CD4-positive, alpha-beta T cell (primary cell): ENCODE measurements at regions of chr7 and their contacts with region 1.

Region 1: GRCh38 chr7:116929914-116930913 is 23.1 kb upstream of the ST7 start:
- DNase-seq: peak; percentile 63 to 85 (median 71)
- ATAC-seq: peak; percentile 93
- H3K4me3 ChIP-seq: no peak overlapping the region
- H3K4me3 Mint-ChIP-seq: no peak overlapping the region
- H3K27ac ChIP-seq: no peak overlapping the region
- H3K27ac Mint-ChIP-seq: no peak overlapping the region
- H3K4me1 ChIP-seq: peaks cover 6% of the 10 kb centered on the region
- H3K4me1 Mint-ChIP-seq: peaks cover 8% of the 10 kb centered on the region
- H3K27me3 ChIP-seq: no peaks in the 10 kb centered on the region
- H3K27me3 Mint-ChIP-seq: peaks cover 9% of the 10 kb centered on the region
- CTCF ChIP-seq: peak; percentile 97

Region 2: DNA sequence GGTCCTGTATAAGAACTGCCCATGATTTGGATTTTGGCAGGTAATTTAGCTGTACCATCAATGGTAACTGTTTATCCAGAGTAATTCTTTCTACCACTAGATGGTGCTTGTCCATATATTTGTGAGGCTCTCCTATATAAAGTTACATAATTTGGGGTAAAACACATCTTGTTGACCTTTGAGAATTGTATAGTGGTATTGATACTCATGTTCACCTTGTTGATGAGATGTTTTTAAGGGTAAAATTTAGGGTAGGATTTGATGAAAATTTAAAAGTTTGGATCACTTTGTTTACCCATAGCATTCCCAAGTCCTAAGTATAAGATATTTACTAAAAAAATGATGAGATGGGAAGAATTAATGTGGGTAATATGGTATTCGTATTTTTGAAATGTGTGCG is 54.7 kb after region 1 on chr7:
- CTCF ChIA-PET with region 1: interaction called, 4 read pairs
- POLR2A ChIA-PET with region 1: no interaction called
- intact Hi-C with region 1: loop called (anchors 2 kb)
- DNase-seq: peak in 3 of 14 experiments; percentile 55 to 62 (median 61)
- ATAC-seq: peak; percentile 55
- H3K4me3 ChIP-seq: no peak overlapping the region
- H3K4me3 Mint-ChIP-seq: no peak overlapping the region
- H3K27ac ChIP-seq: no peak overlapping the region
- H3K27ac Mint-ChIP-seq: no peak overlapping the region
- H3K4me1 ChIP-seq: no peaks in the 10 kb centered on the region
- H3K4me1 Mint-ChIP-seq: peaks cover 3% of the 10 kb centered on the region
- H3K27me3 ChIP-seq: no peaks in the 10 kb centered on the region
- H3K27me3 Mint-ChIP-seq: no peaks in the 10 kb centered on the region
- CTCF ChIP-seq: peak; percentile 83

Region 3: GRCh38 chr7:117012696-117013095 is 82.5 kb after region 1 on chr7:
- CTCF ChIA-PET with region 1: interaction called, 6 read pairs
- POLR2A ChIA-PET with region 1: no interaction called
- intact Hi-C with region 1: loop called in 1 of 2 experiments (anchors 2 kb)
- DNase-seq: peak in 3 of 14 experiments; percentile 32 to 57 (median 52)
- ATAC-seq: peak; percentile 59
- H3K4me3 ChIP-seq: no peak overlapping the region
- H3K4me3 Mint-ChIP-seq: no peak overlapping the region
- H3K27ac ChIP-seq: no peak overlapping the region
- H3K27ac Mint-ChIP-seq: no peak overlapping the region
- H3K4me1 ChIP-seq: peaks cover 18% of the 10 kb centered on the region
- H3K4me1 Mint-ChIP-seq: peaks cover 74% of the 10 kb centered on the region
- H3K27me3 ChIP-seq: no peaks in the 10 kb centered on the region
- H3K27me3 Mint-ChIP-seq: no peaks in the 10 kb centered on the region
- CTCF ChIP-seq: peak; percentile 54

Region 4: DNA sequence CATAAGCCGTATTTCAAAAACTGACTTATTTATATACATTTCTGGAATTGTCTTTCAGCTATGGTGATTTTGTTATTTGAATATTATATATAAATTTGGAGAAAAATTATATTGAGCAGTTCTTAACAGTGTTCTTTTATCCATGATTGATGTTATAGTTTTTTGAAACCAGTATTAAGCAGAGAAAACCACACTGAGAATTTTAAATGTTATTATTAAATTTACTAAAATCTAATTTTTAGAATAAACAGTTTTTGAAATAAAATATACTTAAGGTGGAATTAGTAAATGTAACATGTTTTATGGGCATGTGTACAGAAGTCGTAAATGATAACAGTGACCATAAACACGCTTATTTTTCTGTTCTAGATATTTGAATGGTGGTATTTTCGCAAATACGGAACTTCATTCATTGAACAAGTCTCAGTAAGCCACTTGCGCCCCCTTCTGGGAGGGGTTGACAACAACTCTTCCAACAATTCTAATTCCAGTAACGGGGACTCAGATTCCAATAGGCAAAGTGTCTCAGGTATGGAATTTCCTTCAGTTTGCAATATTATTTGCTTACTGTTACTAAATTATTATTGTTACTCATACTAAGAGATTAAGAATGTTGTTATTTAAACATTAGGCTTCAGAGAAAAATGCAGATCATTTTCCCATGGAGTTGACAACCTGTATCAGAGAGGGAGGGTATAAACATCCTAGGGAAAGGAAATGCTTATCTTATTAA is 189.1 kb after region 1 on chr7:
- CTCF ChIA-PET with region 1: interaction called, 18 read pairs
- POLR2A ChIA-PET with region 1: no interaction called
- intact Hi-C with region 1: loop called in 1 of 2 experiments (anchors 1 kb)
- DNase-seq: peak; percentile 56 to 86 (median 70)
- ATAC-seq: peak; percentile 57
- H3K4me3 ChIP-seq: no peak overlapping the region
- H3K4me3 Mint-ChIP-seq: no peak overlapping the region
- H3K27ac ChIP-seq: no peak overlapping the region
- H3K27ac Mint-ChIP-seq: no peak overlapping the region
- H3K4me1 ChIP-seq: no peaks in the 10 kb centered on the region
- H3K4me1 Mint-ChIP-seq: no peaks in the 10 kb centered on the region
- H3K27me3 ChIP-seq: no peaks in the 10 kb centered on the region
- H3K27me3 Mint-ChIP-seq: no peaks in the 10 kb centered on the region
- CTCF ChIP-seq: peak; percentile 89

Region 5: DNA sequence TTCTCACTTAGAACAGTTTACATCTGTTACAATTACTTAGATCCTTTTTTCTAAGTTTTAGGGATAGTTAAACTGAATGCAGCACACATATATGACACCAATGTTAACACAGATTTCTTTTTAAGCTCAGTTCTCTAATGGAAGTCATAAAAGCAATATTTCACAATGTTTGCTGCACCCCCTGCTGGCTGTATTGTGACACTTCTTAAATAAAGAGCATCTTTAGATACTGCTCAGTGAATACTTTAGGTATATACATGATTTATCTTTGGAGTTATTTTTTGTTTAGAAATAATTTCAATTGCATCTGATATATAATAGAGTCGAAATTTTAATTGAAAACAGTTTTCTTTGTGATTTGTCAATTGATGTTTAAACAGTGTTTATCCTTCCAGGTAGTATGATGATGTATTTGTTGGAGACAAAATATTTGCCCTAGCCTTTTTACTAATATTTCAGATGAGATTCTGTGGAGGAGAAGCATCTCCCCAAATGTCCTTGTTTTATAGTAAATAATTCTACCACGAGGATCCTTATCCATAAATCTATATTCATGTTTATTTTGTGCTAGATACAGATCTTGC is 197.5 kb after region 1 on chr7:
- CTCF ChIA-PET with region 1: interaction called, 20 read pairs
- POLR2A ChIA-PET with region 1: interaction called, 5 read pairs
- intact Hi-C with region 1: loop called (anchors 1 to 2 kb)
- DNase-seq: peak in 13 of 14 experiments; percentile 15 to 74 (median 36)
- ATAC-seq: peak; percentile 68
- H3K4me3 ChIP-seq: no peak overlapping the region
- H3K4me3 Mint-ChIP-seq: no peak overlapping the region
- H3K27ac ChIP-seq: no peak overlapping the region
- H3K27ac Mint-ChIP-seq: no peak overlapping the region
- H3K4me1 ChIP-seq: no peaks in the 10 kb centered on the region
- H3K4me1 Mint-ChIP-seq: no peaks in the 10 kb centered on the region
- H3K27me3 ChIP-seq: no peaks in the 10 kb centered on the region
- H3K27me3 Mint-ChIP-seq: no peaks in the 10 kb centered on the region
- CTCF ChIP-seq: peak; percentile 92

Region 6: GRCh38 chr7:118153551-118154177 is 1223.5 kb after region 1 on chr7:
- CTCF ChIA-PET with region 1: no interaction called
- POLR2A ChIA-PET with region 1: no interaction called
- intact Hi-C with region 1: loop called (anchors 5 to 10 kb)
- DNase-seq: peak in 4 of 14 experiments; percentile 20 to 59 (median 48)
- ATAC-seq: no peak
- H3K4me3 ChIP-seq: no peak overlapping the region
- H3K4me3 Mint-ChIP-seq: no peak overlapping the region
- H3K27ac ChIP-seq: no peak overlapping the region
- H3K27ac Mint-ChIP-seq: no peak overlapping the region
- H3K4me1 ChIP-seq: no peaks in the 10 kb centered on the region
- H3K4me1 Mint-ChIP-seq: no peaks in the 10 kb centered on the region
- H3K27me3 ChIP-seq: peaks cover 0 to 16% of the 10 kb centered on the region in 2 experiments
- H3K27me3 Mint-ChIP-seq: peaks cover 51% of the 10 kb centered on the region
- CTCF ChIP-seq: peak; percentile 91